Panc1 (cell line): ENCODE measurements at regions of chr6 and their contacts with region 1.

Region 1: DNA sequence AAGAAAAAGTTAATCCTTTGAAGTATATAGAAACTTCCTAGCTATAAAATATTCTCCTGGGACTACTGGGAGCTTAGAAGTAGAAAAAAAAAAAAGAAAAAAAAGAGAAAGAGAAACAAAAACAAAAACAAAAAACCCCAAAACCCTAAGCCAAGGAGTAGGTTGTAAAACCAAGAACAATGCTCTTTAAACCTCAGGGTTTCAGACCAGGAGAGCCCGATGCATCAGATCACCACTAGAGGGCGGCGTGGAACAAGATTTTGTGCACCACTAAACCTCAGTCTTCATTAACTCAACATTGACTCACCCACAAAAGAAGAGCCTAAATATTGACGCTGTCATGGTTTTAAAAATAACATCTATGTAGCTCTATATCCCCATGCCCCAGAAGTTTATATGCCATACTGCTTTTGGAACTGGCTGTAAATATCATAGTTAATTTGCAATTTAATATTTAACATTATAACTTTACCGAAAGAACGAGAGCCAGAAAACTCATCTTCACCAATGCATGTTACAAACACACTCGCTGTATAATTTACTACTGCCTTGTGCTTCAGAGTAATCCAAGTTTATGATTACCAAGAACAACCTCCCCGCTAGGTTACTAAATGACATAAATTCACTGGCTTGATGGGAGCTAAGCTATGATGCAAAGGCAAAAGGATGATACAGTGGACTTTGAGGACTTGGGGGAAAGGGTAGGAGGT is 19.2 kb downstream of the MCUR1 start:
- DNase-seq: peak; percentile 71
- ATAC-seq: peak; percentile 96
- H3K4me3 ChIP-seq: no peak overlapping the region
- H3K27ac ChIP-seq: no peak overlapping the region
- H3K4me1 ChIP-seq: no peaks in the 10 kb centered on the region
- H3K27me3 ChIP-seq: no peaks in the 10 kb centered on the region
- CTCF ChIP-seq: peak; percentile 95

Region 2: GRCh38 chr6:14066782-14067406 is 271.7 kb after region 1 on chr6:
- CTCF ChIA-PET with region 1: interaction called, 5 read pairs
- POLR2A ChIA-PET with region 1: no interaction called
- in situ Hi-C with region 1: no loop called
- intact Hi-C with region 1: loop called (anchors 5 kb)
- DNase-seq: no peak
- ATAC-seq: peak; percentile 88
- H3K4me3 ChIP-seq: no peak overlapping the region
- H3K27ac ChIP-seq: no peak overlapping the region
- H3K4me1 ChIP-seq: no peaks in the 10 kb centered on the region
- H3K27me3 ChIP-seq: no peaks in the 10 kb centered on the region
- CTCF ChIP-seq: peak; percentile 76

Region 3: DNA sequence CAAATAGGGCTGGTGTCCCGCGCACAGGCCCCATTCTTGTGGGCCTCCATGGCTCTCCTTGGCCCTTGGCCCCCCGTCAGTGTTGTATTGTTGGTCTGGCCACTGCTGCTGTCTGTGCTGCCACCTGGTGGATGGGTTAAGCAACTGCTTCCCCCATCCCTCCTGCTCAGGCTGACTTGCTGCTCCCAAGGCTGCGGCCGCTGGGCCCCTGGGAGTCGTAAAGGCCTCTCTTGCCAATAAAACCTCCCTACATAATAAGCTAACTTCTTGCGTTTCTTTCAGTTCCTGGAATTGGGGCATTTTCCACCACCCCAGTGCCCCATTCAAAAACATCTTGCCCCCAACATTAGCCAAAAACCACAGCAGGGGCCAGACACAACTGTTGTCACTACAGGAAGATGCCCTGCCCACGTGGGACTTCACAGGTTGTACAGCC is 349.5 kb after region 1 on chr6:
- CTCF ChIA-PET with region 1: no interaction called
- POLR2A ChIA-PET with region 1: no interaction called
- in situ Hi-C with region 1: no loop called
- intact Hi-C with region 1: loop called (anchors 5 kb)
- DNase-seq: peak; percentile 53
- ATAC-seq: peak; percentile 96
- H3K4me3 ChIP-seq: no peak overlapping the region
- H3K27ac ChIP-seq: no peak overlapping the region
- H3K4me1 ChIP-seq: no peaks in the 10 kb centered on the region
- H3K27me3 ChIP-seq: no peaks in the 10 kb centered on the region; the same call in 1 of the 2 replicates
- CTCF ChIP-seq: peak; percentile 97